Heart left ventricle (tissue), 16 donors: ENCODE measurements at regions of chr1 and their contacts with region 1.

Region 1: DNA sequence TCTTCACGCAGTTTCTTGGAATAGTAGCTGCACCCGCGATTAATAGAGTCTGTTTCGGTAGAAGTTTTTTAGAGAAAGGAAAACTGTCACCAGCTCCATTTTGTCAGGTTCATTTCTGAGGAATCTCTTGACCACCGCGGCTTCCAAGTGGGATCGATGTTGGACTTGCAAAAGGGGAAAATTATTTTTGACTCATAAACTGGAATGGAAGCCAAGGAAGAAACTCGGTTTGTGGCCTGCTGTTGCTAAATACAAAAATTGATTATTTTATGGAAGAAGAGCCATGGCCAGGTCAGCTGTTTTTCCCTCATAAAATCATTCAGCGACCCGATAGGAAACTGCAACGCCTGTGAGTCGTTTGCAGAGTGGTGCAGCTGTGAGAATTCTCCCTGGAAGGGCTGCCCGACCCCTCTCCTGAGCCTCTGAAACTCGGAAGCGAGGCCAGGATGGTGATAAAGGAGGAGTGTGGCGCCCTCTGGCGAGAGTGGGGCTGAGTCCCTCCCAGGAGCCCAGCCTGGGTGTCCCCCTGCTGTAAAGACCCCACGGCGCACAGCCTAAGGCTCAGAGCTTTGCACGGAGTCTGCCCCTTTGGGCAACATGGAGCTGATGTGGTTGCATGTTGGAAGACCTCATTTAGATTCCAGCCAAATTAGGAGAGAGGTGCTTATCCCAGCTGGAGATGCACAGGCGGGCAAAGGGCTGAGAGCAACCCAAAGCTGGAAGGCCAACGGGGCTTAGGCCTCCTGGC is 83.6 kb upstream of the SLC25A33 start:
- DNase-seq: peak; percentile 59 to 83 (median 60)
- ATAC-seq: peak; percentile 69 to 85 (median 82)
- H3K4me3 ChIP-seq: peak overlapping the region in 1 of 12 donors; percentile 15
- H3K27ac ChIP-seq: no peak overlapping the region
- H3K4me1 ChIP-seq: peaks cover 0 to 9% (median 0%) of the 10 kb centered on the region in 12 donors
- H3K27me3 ChIP-seq: no peaks in the 10 kb centered on the region
- CTCF ChIP-seq: peak; percentile 63 to 83 (median 76)
- POLR2A ChIP-seq: no peak

Region 2: DNA sequence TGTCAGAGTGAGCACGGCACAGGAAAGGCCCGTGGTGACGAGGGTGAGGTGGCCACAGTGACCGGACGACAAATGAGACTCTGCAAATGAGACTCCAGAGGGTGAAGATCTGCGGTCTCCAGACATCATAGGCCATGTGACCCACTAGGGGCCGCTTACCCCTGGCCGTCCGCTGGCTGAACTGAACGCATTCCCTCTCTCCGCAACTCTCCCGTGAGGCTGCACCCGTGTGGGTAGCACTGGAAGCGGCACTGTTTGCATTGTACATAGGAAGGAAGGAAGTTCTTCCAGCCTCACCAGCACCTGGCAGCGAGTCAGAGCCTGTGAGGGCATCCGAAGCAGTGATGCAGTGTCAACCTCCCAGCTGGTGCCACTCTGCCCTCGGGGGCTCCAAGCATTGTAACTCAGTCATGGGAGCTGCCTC is 186.6 kb before region 1 on chr1:
- intact Hi-C with region 1: loop called in 6 of 10 experiments (anchors 2 to 10 kb)
- DNase-seq: no peak
- ATAC-seq: peak in 2 of 4 donors; percentile 14 to 19
- H3K4me3 ChIP-seq: no peak overlapping the region
- H3K27ac ChIP-seq: no peak overlapping the region
- H3K4me1 ChIP-seq: peaks cover 0 to 36% (median 6%) of the 10 kb centered on the region in 12 donors
- H3K27me3 ChIP-seq: no peaks in the 10 kb centered on the region
- CTCF ChIP-seq: no peak
- POLR2A ChIP-seq: no peak

Region 3: GRCh38 chr1:9371391-9371935 is 84.2 kb before region 1 on chr1:
- intact Hi-C with region 1: loop called in 1 of 10 experiments (anchors 10 kb)
- DNase-seq: peak in 4 of 5 donors; percentile 54 to 75 (median 66)
- ATAC-seq: peak; percentile 58 to 83 (median 66)
- H3K4me3 ChIP-seq: no peak overlapping the region
- H3K27ac ChIP-seq: peak overlapping the region in 6 of 12 donors; percentile 18 to 77 (median 51)
- H3K4me1 ChIP-seq: peaks cover 0 to 40% (median 16%) of the 10 kb centered on the region in 12 donors
- H3K27me3 ChIP-seq: no peaks in the 10 kb centered on the region
- CTCF ChIP-seq: no peak
- POLR2A ChIP-seq: no peak